Activated naive CD4-positive, alpha-beta T cell treated with anti-CD3 and anti-CD28 coated beads, Interleukin-2, amount 10 ng/mL, durations not matched to agents 7 days and 5 days (primary cell): ENCODE measurements at regions of chr1 and their contacts with region 1.

Region 1: GRCh38 chr1:151534665-151535278 is 5.3 kb upstream of the TUFT1 start:
- DNase-seq: peak; percentile 85
- H3K4me3 Mint-ChIP-seq: no peak overlapping the region
- H3K27ac Mint-ChIP-seq: no peak overlapping the region
- H3K4me1 Mint-ChIP-seq: peaks cover 5% of the 10 kb centered on the region
- H3K27me3 Mint-ChIP-seq: peaks cover 16% of the 10 kb centered on the region

Region 2: GRCh38 chr1:151113877-151114276 is 420.9 kb before region 1 on chr1:
- CTCF ChIA-PET with region 1: no interaction called
- DNase-seq: no peak
- H3K4me3 Mint-ChIP-seq: no peak overlapping the region
- H3K27ac Mint-ChIP-seq: no peak overlapping the region
- H3K4me1 Mint-ChIP-seq: no peaks in the 10 kb centered on the region
- H3K27me3 Mint-ChIP-seq: no peaks in the 10 kb centered on the region

Region 3: GRCh38 chr1:151327223-151327902 is 207.4 kb before region 1 on chr1 and contains the start of gene PI4KB:
- CTCF ChIA-PET with region 1: no interaction called
- DNase-seq: peak; percentile 95
- H3K4me3 Mint-ChIP-seq: peak within 1 kb of the TSS; percentile 98
- H3K27ac Mint-ChIP-seq: peak within 1 kb of the TSS; percentile 94
- H3K4me1 Mint-ChIP-seq: peaks cover 39% of the 10 kb centered on the region
- H3K27me3 Mint-ChIP-seq: peaks cover 3% of the 10 kb centered on the region

Region 4: DNA sequence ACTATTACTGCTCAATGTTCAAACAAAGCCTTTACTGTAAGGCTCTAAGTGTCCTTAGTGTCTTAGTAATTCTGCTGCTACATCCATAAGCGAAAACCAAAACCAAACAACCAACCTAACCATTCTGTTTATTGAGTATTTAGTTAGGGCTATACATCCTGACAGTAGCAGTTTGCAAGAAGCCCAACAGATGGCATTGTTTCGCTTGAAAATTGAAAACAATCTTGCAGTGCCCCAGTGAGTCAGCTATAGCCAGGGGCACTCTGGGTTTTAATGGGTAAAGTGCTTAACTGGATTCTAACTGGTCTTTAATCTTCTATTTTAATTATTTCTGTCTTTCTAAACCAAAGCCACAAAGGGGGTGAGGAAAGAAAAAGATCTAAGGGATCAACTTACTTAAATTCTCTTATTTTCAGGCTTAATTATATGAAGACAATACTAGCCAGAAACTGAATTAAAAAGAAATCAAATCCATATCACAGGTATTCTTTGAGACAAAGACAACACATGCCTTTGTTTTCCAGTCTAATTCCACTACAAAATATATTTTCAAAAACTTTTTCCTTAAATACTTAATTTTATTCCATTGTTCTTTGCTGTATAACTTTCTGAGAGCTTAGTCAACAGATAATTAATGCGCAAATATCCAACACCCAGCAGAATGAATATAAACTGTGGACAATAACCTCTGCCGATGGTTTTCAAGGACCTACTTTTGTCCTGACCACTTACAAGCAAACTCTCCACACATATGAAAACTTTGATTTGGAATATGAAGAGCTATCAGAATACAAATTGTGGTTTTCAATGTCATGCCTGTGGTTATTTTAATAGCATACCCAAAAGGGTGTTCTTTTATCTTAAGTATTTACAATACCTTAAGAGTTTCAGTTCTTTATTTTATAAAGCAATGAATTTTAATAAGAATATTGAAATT is 90.7 kb before region 1 on chr1:
- CTCF ChIA-PET with region 1: interaction called, 12 read pairs
- DNase-seq: peak; percentile 81
- H3K4me3 Mint-ChIP-seq: no peak overlapping the region
- H3K27ac Mint-ChIP-seq: no peak overlapping the region
- H3K4me1 Mint-ChIP-seq: peaks cover 30% of the 10 kb centered on the region
- H3K27me3 Mint-ChIP-seq: no peaks in the 10 kb centered on the region

Region 5: DNA sequence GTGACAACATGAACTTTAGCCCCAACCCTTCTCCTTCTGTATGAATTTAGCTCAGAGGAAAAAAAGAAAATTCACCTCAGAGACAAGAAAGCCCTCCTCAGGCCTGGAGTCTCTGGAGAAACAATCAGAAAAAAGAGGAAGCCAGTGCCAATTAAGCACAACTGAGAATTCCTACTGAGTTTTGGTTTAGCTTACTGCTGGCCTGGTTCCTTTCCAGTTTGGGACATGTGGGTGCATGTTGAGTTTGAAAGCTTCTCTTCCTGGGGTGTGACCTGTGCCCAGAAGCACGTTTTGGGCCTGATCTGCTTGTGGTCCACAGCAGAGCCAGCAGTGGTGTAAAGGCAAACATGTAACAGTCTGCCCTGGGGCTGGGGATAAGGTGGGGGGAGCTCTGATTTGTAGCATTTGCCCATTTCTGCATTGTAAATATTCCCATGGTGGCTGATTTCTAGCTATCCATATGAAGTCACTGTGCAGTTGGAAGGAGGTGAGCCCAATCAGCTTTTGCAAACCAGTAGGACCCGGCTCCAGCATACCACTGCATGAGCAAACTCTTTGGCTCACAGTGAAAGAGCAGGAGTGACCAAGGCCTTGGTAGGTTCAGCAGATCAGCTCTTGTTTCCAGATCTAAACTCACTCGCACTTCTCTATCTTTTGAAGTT is 323.4 kb after region 1 on chr1:
- CTCF ChIA-PET with region 1: no interaction called
- DNase-seq: no peak
- H3K4me3 Mint-ChIP-seq: no peak overlapping the region
- H3K27ac Mint-ChIP-seq: no peak overlapping the region
- H3K4me1 Mint-ChIP-seq: no peaks in the 10 kb centered on the region
- H3K27me3 Mint-ChIP-seq: peaks cover 33% of the 10 kb centered on the region